Gastrocnemius medialis (tissue), 4 donors: ENCODE measurements at regions of chr3 and their contacts with region 1.

Region 1: DNA sequence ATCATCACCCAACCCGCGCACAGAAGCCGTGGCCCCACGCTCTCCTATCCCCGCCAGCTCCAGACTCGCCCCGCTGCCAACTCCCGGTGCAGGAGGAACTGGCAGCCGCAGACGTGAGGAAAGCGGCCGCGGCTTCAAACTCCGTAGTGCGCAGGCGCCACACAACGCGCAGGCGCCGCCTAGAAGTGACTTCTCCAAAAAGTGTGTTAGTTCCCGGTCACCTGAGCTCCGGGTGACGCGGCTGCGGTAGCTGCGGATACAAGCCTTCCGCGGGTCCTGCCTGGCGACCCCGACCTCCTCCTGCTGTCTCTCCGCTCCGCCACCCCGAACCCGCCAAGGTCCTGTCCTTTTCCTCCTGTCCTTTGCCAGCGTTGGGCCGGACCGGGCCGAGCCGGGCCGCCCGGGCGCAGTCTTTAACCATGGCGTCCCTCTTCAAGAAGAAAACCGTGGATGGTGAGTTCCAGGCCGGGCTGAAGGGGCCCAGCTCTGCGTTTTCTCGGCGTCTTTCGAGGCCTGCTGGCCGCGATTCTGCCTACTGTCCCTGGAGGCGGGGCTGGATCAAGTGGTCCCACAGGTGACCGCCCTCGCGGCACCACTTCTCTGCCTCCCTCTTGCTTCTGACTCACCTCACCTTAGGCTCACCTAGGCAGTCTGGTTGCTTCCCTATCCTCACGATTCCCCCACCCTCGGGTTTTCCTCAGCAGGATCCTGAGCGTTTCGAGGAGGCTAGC is at the start of gene CHMP2B:
- DNase-seq: peak; percentile 87 to 94
- ATAC-seq: peak; percentile 94 to 97
- H3K4me3 ChIP-seq: peak within 1 kb of the TSS; percentile 79 to 100 (median 90)
- H3K27ac ChIP-seq: peak within 1 kb of the TSS; percentile 94 to 100 (median 98)
- H3K4me1 ChIP-seq: peaks cover 30 to 32% of the 10 kb centered on the region in 2 donors
- H3K27me3 ChIP-seq: no peaks in the 10 kb centered on the region
- CTCF ChIP-seq: no peak
- POLR2A ChIP-seq: peak; percentile 91 to 92
- total RNA-seq, gene CHMP2B: 30.7 to 46.9 (median 33.6) TPM

Region 2: DNA sequence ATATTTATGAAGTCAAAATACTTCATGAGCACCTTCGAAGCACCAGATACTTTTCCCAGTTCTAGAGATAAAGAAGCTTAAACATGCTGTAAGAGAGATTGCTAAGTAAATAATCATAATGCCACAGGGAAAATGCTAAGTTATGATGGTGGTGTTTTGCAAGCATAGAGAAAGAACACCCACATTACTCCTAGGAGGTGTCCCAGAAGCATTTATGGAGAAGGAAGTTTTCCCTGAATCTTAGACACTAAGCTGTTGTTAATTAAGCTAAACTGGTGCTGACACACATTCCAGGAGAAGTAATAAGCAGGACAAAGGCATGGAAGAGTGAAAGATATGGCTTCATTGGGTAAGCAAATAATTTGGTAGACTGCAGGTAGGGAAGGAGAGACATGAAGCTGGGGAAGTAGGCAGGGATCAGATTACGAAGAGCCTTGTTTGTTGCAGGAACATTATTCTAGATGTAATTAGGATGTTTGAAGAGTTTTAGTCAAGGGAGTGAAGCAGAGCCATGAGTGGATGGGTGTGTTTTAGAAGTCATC is 40.6 kb before region 1 on chr3:
- in situ Hi-C with region 1: no loop called
- intact Hi-C with region 1: no loop called
- DNase-seq: no peak
- ATAC-seq: no peak
- H3K4me3 ChIP-seq: no peak overlapping the region
- H3K27ac ChIP-seq: no peak overlapping the region
- H3K4me1 ChIP-seq: no peaks in the 10 kb centered on the region
- H3K27me3 ChIP-seq: no peaks in the 10 kb centered on the region
- CTCF ChIP-seq: no peak
- POLR2A ChIP-seq: no peak

Region 3: GRCh38 chr3:88149509-88150362 is 922.5 kb after region 1 on chr3 and contains the start of gene C3orf38:
- in situ Hi-C with region 1: no loop called
- intact Hi-C with region 1: loop called (anchors 10 kb)
- DNase-seq: peak; percentile 81 to 85
- ATAC-seq: peak; percentile 99
- H3K4me3 ChIP-seq: peak within 1 kb of the TSS; percentile 75 to 96 (median 90)
- H3K27ac ChIP-seq: peak within 1 kb of the TSS; percentile 89 to 94 (median 90)
- H3K4me1 ChIP-seq: peaks cover 15 to 18% of the 10 kb centered on the region in 2 donors
- H3K27me3 ChIP-seq: no peaks in the 10 kb centered on the region
- CTCF ChIP-seq: no peak
- POLR2A ChIP-seq: peak; percentile 43 to 56
- total RNA-seq, gene C3orf38: 6.0 to 14.5 (median 8.5) TPM